ENCODE measurements at regions of chr15 and their contacts with region 1.

Region 1: GRCh38 chr15:78108299-78109084 is 16.1 kb downstream of the SH2D7 start:
- DNase-seq: peak; percentile 88 to 91 (median 89)
- ATAC-seq: peak; percentile 92
- H3K4me3 ChIP-seq: no peak overlapping the region
- H3K27ac ChIP-seq: no peak overlapping the region
- H3K4me1 ChIP-seq: peaks cover 7% of the 10 kb centered on the region
- H3K27me3 ChIP-seq: no peaks in the 10 kb centered on the region
- CTCF ChIP-seq: peak; percentile 93 to 98 (median 97)
- POLR2A ChIP-seq: no peak

Region 2: GRCh38 chr15:77798151-77798835 is 310.2 kb before region 1 on chr15:
- intact Hi-C with region 1: no loop called
- DNase-seq: peak; percentile 28 to 70 (median 33)
- ATAC-seq: no peak
- H3K4me3 ChIP-seq: no peak overlapping the region
- H3K27ac ChIP-seq: no peak overlapping the region
- H3K4me1 ChIP-seq: no peaks in the 10 kb centered on the region
- H3K27me3 ChIP-seq: no peaks in the 10 kb centered on the region
- CTCF ChIP-seq: no peak
- POLR2A ChIP-seq: no peak

Region 3: GRCh38 chr15:77964193-77964592 is 144.3 kb before region 1 on chr15:
- intact Hi-C with region 1: loop called (anchors 5 kb)
- DNase-seq: no peak
- ATAC-seq: no peak
- H3K4me3 ChIP-seq: no peak overlapping the region
- H3K27ac ChIP-seq: no peak overlapping the region
- H3K4me1 ChIP-seq: peaks cover 5% of the 10 kb centered on the region
- H3K27me3 ChIP-seq: no peaks in the 10 kb centered on the region
- CTCF ChIP-seq: no peak
- POLR2A ChIP-seq: no peak

Region 4: DNA sequence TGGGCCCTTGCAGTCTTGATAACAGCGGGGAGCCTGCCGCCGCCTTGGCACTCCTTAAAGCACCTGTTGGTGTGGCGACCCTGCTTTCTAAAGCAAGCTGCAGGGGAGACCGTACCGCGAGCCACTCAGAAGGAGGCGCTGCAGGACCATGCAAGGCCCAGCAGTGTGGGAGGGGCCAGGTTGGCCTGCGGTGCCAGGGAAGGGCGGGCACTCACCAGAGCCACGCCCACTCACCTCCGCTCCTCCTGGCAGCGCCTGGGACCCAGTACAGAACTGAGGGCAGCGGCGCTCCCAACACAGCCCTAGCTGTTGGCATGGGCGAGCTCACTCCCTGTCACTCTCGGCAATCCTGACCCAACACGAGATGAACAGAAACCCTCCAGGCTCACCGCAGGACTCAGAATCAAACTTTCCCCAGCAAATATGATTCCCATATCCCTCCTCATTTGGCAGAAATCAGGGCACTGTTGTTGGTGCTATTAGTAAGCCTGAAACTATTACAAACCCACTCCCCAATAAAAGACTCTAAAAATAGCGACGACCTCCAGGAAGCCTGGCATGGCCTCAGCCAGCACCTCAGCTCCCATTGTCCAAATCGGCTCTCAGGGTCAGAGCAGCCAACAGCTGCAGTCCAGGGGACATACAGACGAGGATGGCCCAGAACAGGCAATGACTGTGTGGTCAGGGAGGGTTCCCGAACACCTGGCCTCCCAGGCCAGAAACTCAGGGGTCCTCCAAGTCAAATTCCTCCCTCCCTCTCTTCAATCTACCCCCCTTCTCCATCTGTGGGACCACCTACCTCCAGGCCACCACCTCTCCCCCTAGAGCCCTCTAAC is 108.2 kb before region 1 on chr15:
- intact Hi-C with region 1: loop called (anchors 5 kb)
- DNase-seq: peak; percentile 95 to 98 (median 96)
- ATAC-seq: peak; percentile 79
- H3K4me3 ChIP-seq: no peak overlapping the region
- H3K27ac ChIP-seq: peak overlapping the region; percentile 33 to 61 (median 44)
- H3K4me1 ChIP-seq: peaks cover 56% of the 10 kb centered on the region
- H3K27me3 ChIP-seq: no peaks in the 10 kb centered on the region
- CTCF ChIP-seq: peak; percentile 75 to 97 (median 89)
- POLR2A ChIP-seq: peak in 2 of 3 donors; percentile 9 to 53

Region 5: DNA sequence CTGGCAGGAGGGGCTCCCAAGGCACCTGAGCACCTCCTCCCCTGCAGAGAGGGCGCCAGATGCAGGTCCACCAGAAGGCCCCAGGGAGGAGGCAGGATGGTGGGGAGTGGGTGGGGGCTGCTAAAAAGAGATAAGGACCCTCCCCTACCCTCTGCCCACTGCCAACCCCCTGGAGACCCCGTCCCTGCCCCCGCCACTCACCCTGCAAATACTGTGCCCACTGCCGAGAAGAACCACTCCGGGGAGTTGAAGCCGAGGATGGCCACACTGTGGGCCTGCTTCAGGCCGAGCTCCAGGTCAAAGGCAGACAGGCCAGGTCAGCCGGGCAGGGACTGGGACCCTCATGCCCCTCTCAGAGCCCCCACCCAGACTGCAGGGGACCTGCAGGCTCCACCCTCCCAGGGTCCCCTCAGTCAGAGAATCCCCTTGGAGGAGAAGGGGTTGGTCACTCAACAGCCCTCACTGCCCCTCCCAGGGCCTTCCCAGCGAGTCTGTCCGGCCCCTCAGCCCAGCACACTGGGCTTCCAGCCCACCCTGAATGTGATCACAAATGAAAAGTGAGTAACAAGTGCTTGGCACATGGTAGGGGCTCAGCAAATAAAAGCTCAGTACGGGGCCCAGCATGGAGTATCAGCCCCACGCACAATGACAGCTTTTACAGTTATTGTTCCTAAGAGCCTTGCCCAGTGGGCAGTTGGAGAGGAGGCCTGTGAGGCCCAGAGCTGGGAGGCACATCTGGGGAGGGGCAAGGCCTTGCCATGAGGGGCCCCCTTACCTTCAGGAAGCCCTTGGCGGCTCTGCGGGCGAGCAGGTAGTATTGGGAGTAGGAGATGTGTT is 85.5 kb after region 1 on chr15:
- intact Hi-C with region 1: loop called (anchors 5 kb)
- DNase-seq: peak in 1 of 4 donors; percentile 6
- ATAC-seq: no peak
- H3K4me3 ChIP-seq: no peak overlapping the region
- H3K27ac ChIP-seq: no peak overlapping the region
- H3K4me1 ChIP-seq: no peaks in the 10 kb centered on the region
- H3K27me3 ChIP-seq: no peaks in the 10 kb centered on the region
- CTCF ChIP-seq: no peak
- POLR2A ChIP-seq: no peak

Region 6: DNA sequence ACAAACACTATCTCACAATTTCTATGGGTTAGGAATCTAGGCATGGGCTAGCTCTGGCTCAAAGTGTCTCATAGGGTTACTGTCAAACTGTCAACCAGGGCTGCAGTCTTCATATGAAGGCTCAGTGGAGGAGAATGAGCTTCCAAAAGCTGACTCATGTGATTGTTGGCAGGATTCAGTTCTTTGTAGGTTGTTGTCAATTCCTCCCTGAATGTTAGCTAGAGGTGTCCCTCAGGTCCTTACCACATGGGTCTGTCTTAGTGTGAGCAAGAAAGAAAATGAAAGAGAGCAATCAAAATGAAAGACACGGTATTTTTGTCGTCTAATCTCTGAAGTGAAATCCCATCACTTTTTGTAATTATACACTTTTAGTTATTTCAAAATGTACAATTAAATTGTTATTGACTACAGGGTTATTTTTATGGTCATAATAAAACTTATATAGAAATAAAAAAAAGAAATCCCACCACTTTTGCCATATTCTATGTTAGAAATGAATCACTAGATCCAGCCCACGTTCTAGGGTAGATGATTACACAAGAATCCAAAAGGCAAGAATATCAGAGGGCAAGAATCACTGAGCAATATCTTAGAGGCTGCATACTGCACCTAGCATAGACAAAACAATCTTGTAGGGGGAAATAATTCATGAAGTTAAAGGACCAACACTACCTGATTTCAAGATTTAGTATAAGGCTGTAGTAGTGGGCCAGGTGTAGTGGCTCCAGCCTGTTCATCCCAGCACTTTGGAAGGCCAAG is 117.5 kb after region 1 on chr15:
- intact Hi-C with region 1: no loop called
- DNase-seq: no peak
- ATAC-seq: no peak
- H3K4me3 ChIP-seq: no peak overlapping the region
- H3K27ac ChIP-seq: no peak overlapping the region
- H3K4me1 ChIP-seq: no peaks in the 10 kb centered on the region
- H3K27me3 ChIP-seq: no peaks in the 10 kb centered on the region
- CTCF ChIP-seq: no peak
- POLR2A ChIP-seq: no peak

Region 7: DNA sequence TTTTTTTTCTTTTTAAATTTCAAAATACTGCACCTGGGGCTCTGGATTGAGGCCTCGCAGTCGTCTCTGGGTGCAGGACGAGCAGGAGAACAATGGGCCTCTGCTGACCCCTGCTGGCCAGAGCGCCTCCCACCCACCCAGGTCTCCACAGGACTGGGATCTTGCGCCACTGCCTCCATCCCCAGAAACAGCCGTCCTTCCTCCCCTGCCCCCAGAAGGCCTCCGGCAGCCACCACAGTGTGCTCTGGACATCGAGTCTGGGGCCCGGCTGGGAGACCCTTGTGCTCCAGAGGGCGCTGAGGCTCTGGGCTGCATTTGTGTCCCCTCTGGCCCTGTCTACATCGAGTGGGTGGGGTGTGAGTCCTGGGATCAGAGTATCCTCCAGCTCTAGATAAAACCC is 132.5 kb after region 1 on chr15:
- intact Hi-C with region 1: loop called (anchors 2 kb)
- DNase-seq: peak; percentile 89 to 94 (median 91)
- ATAC-seq: peak; percentile 95
- H3K4me3 ChIP-seq: no peak overlapping the region
- H3K27ac ChIP-seq: no peak overlapping the region
- H3K4me1 ChIP-seq: peaks cover 7% of the 10 kb centered on the region
- H3K27me3 ChIP-seq: no peaks in the 10 kb centered on the region
- CTCF ChIP-seq: peak; percentile 73 to 91 (median 89)
- POLR2A ChIP-seq: no peak

Region 8: GRCh38 chr15:78264304-78265136 is 156.0 kb after region 1 on chr15 and contains the start of gene DNAJA4:
- intact Hi-C with region 1: no loop called
- DNase-seq: peak; percentile 48 to 67 (median 55)
- ATAC-seq: peak; percentile 58
- H3K4me3 ChIP-seq: peak within 1 kb of the TSS; percentile 28 to 40
- H3K27ac ChIP-seq: peak within 1 kb of the TSS in 1 of 4 donors; percentile 33
- H3K4me1 ChIP-seq: peaks cover 25% of the 10 kb centered on the region
- H3K27me3 ChIP-seq: no peaks in the 10 kb centered on the region
- CTCF ChIP-seq: no peak
- POLR2A ChIP-seq: peak in 2 of 3 donors; percentile 14 to 19
- total RNA-seq, gene DNAJA4: 5.9 to 8.0 TPM

Region 9: DNA sequence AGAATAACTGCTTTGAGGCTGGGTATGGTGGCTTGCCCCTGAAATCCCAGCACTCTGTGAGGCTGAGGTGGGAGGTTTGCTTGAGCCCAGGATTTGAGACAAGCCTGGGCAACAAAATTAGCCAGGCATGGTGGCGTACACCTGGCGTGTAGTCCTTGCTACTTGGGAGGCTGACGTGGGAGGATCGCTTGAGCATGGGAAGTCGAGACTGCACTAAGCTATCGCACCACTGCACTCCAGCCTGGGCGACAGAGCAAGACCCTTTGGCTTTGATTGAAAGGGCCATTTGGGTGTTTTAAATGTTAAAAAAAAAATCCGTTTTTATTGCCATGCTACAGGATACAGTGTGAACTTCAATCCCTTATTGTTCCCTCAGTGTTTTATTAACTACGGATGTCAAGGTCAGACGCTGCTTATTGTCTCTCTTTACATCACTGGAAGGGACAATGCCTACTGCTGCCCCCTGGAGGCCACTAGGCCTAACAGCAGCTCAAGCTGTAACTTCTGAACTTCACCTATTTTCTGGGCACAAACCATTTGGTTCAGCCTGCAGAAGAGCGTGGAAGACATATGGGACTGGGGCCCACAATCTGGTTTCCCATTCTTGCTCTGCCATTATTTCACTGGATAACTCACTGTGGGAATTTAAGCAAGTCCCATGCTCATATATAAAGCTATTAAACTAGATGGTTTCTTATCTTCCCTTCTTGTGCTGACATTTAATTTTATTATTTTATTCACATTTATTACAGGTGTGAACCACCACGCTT is 314.3 kb after region 1 on chr15:
- intact Hi-C with region 1: loop called (anchors 5 kb)
- DNase-seq: peak; percentile 63 to 73 (median 66)
- ATAC-seq: peak; percentile 87
- H3K4me3 ChIP-seq: no peak overlapping the region
- H3K27ac ChIP-seq: no peak overlapping the region
- H3K4me1 ChIP-seq: no peaks in the 10 kb centered on the region
- H3K27me3 ChIP-seq: no peaks in the 10 kb centered on the region
- CTCF ChIP-seq: peak; percentile 68 to 83 (median 80)
- POLR2A ChIP-seq: no peak